ENCODE measurements at regions of chr1 and their contacts with region 1.

Region 1: GRCh38 chr1:167533851-167534300 is 15.5 kb upstream of the CD247 start:
- DNase-seq: peak; percentile 74
- ATAC-seq: peak; percentile 82
- H3K4me3 Mint-ChIP-seq: no peak overlapping the region
- H3K27ac Mint-ChIP-seq: no peak overlapping the region
- H3K4me1 Mint-ChIP-seq: peaks cover 7% of the 10 kb centered on the region
- H3K27me3 Mint-ChIP-seq: peaks cover 6% of the 10 kb centered on the region

Region 2: DNA sequence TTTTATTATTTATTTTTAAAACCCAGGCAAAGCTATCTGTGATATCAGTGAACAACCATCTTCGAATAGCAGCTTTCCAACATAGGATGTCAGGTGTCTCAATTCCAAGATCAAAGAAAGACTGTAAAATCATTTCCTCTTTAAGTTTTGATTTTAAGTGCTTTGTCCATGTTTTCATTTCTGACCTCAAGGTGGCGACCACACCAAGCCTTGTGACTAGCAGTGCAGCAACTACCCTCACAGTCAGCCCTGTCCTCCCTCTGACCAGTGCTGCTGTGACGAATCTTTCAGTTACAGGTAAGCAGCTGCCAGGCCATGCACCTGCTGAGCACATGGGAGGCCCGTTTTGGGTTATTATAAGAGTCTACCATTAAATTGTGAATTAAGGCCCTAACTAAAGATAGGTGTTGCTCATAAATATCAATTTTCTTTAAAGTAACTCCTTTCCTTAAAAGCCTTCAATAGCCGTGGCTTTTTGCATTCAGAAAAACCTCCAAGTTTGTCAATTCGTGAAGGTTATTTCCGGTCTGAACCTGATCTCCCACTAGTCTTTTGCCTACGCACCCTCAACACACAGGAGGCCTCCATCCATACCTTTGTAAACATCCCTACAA is 132.5 kb before region 1 on chr1:
- CTCF ChIA-PET with region 1: interaction called, 43 read pairs
- POLR2A ChIA-PET with region 1: no interaction called
- DNase-seq: peak; percentile 73
- ATAC-seq: peak; percentile 91
- H3K4me3 Mint-ChIP-seq: no peak overlapping the region
- H3K27ac Mint-ChIP-seq: no peak overlapping the region
- H3K4me1 Mint-ChIP-seq: peaks cover 8% of the 10 kb centered on the region
- H3K27me3 Mint-ChIP-seq: no peaks in the 10 kb centered on the region

Region 3: GRCh38 chr1:167447521-167448136 is 86.2 kb before region 1 on chr1:
- CTCF ChIA-PET with region 1: interaction called, 34 read pairs
- POLR2A ChIA-PET with region 1: no interaction called
- DNase-seq: peak; percentile 83
- ATAC-seq: peak; percentile 75
- H3K4me3 Mint-ChIP-seq: peak overlapping the region; percentile 67
- H3K27ac Mint-ChIP-seq: peak overlapping the region; percentile 94
- H3K4me1 Mint-ChIP-seq: peaks cover 91% of the 10 kb centered on the region
- H3K27me3 Mint-ChIP-seq: no peaks in the 10 kb centered on the region

Region 4: DNA sequence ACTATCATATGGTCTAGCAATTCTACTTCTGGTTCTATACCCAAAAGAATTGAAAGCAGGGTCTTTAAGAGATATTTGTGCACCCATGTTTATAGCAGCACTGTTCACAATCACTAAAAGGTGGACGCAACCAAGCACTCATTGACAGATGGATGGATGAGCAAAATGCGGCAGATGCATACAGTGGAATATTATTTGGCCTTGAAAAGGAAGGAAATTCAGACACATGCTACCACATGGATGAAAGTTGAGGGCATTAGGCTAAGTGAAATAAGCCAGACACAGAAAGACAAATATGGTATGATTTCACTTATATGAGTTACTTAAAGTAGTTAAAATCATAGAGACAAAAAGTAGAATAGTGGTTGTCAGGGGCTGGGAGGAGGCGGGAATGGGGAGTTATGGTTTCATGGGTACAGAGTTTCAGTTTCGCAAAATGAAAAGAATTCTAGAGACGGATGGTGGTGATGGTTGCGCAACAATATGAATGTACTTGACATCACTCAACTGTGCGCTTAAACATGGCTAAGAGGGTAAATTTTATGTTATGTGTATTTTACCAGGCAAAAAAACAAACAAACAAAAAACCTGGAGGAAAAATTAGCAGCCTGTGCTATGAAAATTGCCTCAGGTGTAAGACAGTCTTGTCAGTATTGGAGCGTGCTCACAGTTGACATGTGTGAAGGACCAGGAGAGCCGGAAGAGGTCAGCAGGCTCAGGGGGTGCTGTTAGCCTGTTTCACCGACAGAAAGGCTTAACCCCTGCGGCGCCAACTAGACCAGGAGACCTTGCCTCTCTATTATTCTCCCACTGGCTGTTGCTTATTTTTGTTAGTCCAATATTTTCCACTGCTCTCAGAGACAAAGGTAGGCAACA is 42.1 kb before region 1 on chr1:
- CTCF ChIA-PET with region 1: interaction called, 10 read pairs
- POLR2A ChIA-PET with region 1: no interaction called
- DNase-seq: peak; percentile 73
- ATAC-seq: peak; percentile 65
- H3K4me3 Mint-ChIP-seq: peak overlapping the region; percentile 77
- H3K27ac Mint-ChIP-seq: peak overlapping the region; percentile 94
- H3K4me1 Mint-ChIP-seq: peaks cover 92% of the 10 kb centered on the region
- H3K27me3 Mint-ChIP-seq: no peaks in the 10 kb centered on the region

Region 5: DNA sequence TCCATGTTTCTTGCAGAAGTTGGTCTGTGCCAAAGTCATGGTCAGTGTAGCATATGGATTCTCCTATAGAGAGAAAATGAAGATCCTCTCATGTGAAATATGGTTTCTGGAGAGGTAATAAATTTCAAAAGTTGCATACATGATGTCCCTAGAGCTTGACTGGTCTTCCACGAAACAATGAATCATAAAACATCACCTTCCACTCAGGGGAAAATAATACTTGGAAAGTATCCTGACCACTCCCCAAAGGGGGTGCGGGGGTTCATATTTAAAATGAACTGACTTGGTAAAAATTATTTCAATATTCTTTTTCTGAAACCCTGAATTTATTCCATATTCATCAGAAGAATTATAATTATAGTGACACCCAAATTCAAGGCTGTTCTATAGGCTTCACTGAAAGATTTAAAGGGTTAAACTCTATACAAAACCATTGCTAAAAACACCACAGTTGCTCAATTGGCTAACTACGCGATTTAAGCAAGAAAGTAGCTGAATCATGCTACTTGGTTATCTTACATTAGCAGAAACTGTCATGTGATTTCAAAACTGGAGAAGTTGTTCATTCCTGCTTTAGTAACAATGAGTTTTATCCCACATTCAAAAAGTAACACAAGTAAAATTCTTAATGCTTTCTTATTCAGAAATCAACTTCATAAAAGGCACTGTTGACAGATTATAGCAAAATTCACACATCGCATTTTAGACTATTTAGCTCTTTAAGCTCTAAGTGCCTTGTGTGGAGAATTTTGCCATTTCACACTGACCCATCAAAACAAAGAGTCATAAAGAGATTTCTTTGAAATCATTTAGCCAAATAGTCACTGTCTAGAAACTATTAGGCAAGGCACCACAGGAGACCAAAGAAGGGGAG is 14.4 kb after region 1 on chr1:
- CTCF ChIA-PET with region 1: interaction called, 17 read pairs
- POLR2A ChIA-PET with region 1: interaction called, 3 read pairs
- DNase-seq: no peak
- ATAC-seq: no peak
- H3K4me3 Mint-ChIP-seq: no peak overlapping the region
- H3K27ac Mint-ChIP-seq: no peak overlapping the region
- H3K4me1 Mint-ChIP-seq: peaks cover 24% of the 10 kb centered on the region
- H3K27me3 Mint-ChIP-seq: no peaks in the 10 kb centered on the region